SK-N-SH (cell line): ENCODE measurements at regions of chr2 and their contacts with region 1.

Region 1: GRCh38 chr2:1641523-1641922 is 102.8 kb downstream of the PXDN start:
- DNase-seq: no peak
- H3K4me3 ChIP-seq: no peak overlapping the region
- H3K27ac ChIP-seq: no peak overlapping the region
- H3K4me1 ChIP-seq: peaks cover 0 to 22% of the 10 kb centered on the region in 2 experiments; a peak in 1 of 4 replicates
- H3K27me3 ChIP-seq: no peaks in the 10 kb centered on the region
- CTCF ChIP-seq: no peak
- EP300 ChIP-seq: no peak
- RAD21 ChIP-seq: no peak

Region 2: GRCh38 chr2:1421726-1422125 is 219.8 kb before region 1 on chr2:
- CTCF ChIA-PET with region 1: no interaction called
- POLR2A ChIA-PET with region 1: no interaction called
- DNase-seq: no peak
- H3K4me3 ChIP-seq: no peak overlapping the region
- H3K27ac ChIP-seq: no peak overlapping the region
- H3K4me1 ChIP-seq: no peaks in the 10 kb centered on the region
- H3K27me3 ChIP-seq: no peaks in the 10 kb centered on the region
- CTCF ChIP-seq: no peak
- EP300 ChIP-seq: no peak
- RAD21 ChIP-seq: no peak

Region 3: DNA sequence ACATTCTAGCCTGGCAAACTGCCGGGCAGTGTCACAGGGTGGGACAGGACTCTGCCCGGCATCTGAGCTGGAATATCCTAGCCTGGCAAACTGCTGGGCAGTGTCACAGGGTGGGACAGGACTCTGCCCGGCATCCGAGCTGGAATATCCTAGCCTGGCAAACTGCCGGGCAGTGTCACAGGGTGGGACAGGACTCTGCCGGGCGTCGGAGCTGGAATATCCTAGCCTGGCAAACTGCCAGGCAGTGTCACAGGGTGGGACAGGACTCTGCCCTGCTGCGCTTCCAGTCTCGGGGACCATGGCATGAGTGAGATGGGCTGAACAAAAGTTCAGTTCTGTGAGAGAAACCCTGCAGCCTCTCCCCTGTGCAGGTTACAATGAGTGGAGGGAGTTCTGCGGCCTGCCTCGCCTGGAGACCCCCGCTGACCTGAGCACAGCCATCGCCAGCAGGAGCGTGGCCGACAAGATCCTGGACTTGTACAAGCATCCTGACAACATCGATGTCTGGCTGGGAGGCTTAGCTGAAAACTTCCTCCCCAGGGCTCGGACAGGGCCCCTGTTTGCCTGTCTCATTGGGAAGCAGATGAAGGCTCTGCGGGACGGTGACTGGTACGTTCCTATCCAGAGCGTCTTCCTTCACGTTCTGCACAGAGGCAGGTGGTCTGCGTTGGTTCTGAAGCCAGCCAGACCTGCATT is 147.9 kb before region 1 on chr2:
- CTCF ChIA-PET with region 1: no interaction called
- POLR2A ChIA-PET with region 1: no interaction called
- DNase-seq: no peak
- H3K4me3 ChIP-seq: no peak overlapping the region
- H3K27ac ChIP-seq: no peak overlapping the region
- H3K4me1 ChIP-seq: no peaks in the 10 kb centered on the region
- H3K27me3 ChIP-seq: no peaks in the 10 kb centered on the region
- CTCF ChIP-seq: no peak
- EP300 ChIP-seq: no peak
- RAD21 ChIP-seq: no peak

Region 4: GRCh38 chr2:1625208-1625937 is 16.1 kb before region 1 on chr2:
- CTCF ChIA-PET with region 1: interaction called, 12 read pairs
- POLR2A ChIA-PET with region 1: no interaction called
- DNase-seq: peak; percentile 79
- H3K4me3 ChIP-seq: no peak overlapping the region
- H3K27ac ChIP-seq: peak overlapping the region in 1 of 2 experiments; percentile 78; a peak in 2 of 4 replicates
- H3K4me1 ChIP-seq: peaks cover 7 to 18% of the 10 kb centered on the region in 2 experiments; a peak in 2 of 4 replicates
- H3K27me3 ChIP-seq: no peaks in the 10 kb centered on the region
- CTCF ChIP-seq: no peak
- EP300 ChIP-seq: peak in 1 of 2 experiments; percentile 65; a peak in 2 of 4 replicates
- RAD21 ChIP-seq: no peak